Tibial artery (tissue), 4 donors: ENCODE measurements at regions of chr3 and their contacts with region 1.

Region 1: GRCh38 chr3:118682921-118683320 is 351.7 kb downstream of the IGSF11 start:
- DNase-seq: no peak
- H3K4me3 ChIP-seq: no peak overlapping the region
- H3K27ac ChIP-seq: no peak overlapping the region
- H3K4me1 ChIP-seq: no peaks in the 10 kb centered on the region
- H3K27me3 ChIP-seq: no peaks in the 10 kb centered on the region
- CTCF ChIP-seq: no peak

Region 2: GRCh38 chr3:116691041-116691440 is 1991.9 kb before region 1 on chr3:
- intact Hi-C with region 1: loop called (anchors 10 kb)
- DNase-seq: no peak
- H3K4me3 ChIP-seq: no peak overlapping the region
- H3K27ac ChIP-seq: no peak overlapping the region
- H3K4me1 ChIP-seq: no peaks in the 10 kb centered on the region
- H3K27me3 ChIP-seq: no peaks in the 10 kb centered on the region
- CTCF ChIP-seq: no peak

Region 3: DNA sequence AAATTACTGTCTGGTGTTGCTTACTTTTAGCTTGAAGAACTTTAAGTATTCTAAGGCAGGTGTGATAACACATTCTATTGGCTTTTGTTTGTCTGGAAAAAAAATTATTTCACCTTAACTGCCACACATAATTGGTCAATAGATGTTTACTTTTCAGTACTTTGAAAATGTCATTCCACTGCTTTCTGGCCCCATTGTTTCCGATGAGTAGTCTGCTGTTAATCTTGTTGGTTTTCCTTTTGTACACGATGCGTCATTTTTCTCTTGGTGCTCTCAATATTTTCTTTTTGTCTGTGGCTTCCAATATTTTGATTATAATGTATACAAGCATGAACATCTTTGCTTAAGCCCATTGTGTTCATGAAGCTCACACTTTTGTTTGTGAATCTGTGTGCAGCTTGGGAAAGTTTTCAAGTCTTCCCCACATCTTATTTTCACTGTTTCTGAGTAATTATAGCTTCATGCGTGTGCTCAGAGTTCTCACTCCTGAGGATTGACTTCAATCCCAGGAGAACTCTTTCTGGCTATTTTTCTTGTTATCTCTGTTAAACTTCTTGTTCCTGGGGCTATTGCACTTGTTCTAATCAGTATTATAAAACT is 312.9 kb before region 1 on chr3:
- intact Hi-C with region 1: no loop called
- DNase-seq: no peak
- H3K4me3 ChIP-seq: no peak overlapping the region
- H3K27ac ChIP-seq: no peak overlapping the region
- H3K4me1 ChIP-seq: no peaks in the 10 kb centered on the region
- H3K27me3 ChIP-seq: no peaks in the 10 kb centered on the region
- CTCF ChIP-seq: no peak

Region 4: DNA sequence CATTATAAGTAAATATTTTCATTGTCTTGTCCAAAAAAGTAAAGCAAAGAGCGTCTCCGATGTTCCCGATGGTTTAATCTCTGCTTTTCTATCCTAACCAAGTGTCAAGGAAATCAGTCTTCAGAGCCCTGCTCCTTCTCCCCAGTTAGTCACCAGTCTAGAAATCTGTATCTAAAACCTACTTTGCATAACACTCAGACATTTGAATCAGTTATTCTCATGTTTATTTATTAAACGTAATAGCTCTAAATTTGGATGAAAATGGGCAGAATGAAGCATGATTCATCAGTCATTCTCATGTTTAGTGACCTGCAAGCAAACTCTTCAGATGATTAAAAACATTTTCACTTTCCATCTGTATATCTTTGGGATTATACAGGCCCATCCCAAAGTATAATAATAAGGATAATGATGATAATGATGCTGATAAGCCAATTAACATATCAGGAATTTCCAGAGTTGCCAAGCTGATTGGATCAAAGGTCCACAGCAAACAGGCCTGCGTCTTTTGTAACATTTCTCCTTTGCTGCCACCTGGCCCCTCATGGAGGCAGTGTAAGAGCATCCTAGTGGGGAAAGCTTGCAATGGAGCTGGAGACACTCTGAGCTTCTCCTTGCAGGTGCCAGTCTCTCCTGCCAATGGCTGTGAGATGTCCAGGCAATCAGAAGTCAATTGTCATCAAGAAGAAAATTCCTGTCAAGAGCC is 77.8 kb after region 1 on chr3:
- intact Hi-C with region 1: no loop called
- DNase-seq: no peak
- H3K4me3 ChIP-seq: no peak overlapping the region
- H3K27ac ChIP-seq: no peak overlapping the region
- H3K4me1 ChIP-seq: no peaks in the 10 kb centered on the region
- H3K27me3 ChIP-seq: no peaks in the 10 kb centered on the region
- CTCF ChIP-seq: no peak